A549 (cell line): ENCODE measurements at regions of chr7 and their contacts with region 1.

Region 1: DNA sequence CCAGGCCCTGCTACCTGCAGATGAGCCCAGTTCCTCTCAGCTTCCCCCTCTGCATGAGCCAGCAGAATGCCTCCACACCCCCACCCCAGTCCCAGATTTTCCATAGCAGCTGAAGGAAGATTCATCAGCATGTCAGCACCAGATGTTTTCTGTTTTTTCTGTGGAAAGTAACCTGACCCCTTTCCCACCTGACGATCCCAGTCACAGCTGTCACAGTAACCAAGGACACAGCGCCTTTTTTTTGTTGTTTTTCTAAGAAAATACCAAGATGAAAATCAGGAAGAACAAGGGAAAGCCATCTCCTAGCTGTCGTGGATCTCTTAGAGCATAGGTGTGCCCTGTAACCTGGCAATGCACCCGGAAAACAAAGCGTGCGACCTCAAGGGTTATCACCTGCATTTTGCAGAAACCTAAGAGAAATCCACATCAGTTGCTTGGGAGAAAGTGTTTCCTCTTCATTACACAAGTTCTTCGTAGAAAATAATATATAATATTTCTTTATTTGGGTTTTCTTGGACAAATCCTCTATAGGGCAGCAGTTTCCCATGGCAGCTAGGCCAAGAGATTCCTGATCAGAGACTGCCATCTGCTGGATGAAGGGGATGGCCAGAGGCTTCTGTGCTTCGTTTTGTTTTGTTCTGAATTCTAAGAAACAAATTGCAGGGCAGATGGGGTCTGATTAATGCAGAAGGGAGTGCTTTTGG is 401.9 kb downstream of the TNS3 start:
- DNase-seq: peak; percentile 55 to 66
- ATAC-seq: peak; percentile 89 to 96
- H3K4me3 ChIP-seq: no peak overlapping the region
- H3K27ac ChIP-seq: peak overlapping the region; percentile 32 to 72; a peak in 5 of 6 replicates
- H3K4me1 ChIP-seq: peaks cover 6% of the 10 kb centered on the region; the same call in 2 of the 3 replicates
- CTCF ChIP-seq: peak; percentile 96
- EP300 ChIP-seq: no peak
- POLR2A ChIP-seq: no peak
- RAD21 ChIP-seq: peak; percentile 96

Region 2: DNA sequence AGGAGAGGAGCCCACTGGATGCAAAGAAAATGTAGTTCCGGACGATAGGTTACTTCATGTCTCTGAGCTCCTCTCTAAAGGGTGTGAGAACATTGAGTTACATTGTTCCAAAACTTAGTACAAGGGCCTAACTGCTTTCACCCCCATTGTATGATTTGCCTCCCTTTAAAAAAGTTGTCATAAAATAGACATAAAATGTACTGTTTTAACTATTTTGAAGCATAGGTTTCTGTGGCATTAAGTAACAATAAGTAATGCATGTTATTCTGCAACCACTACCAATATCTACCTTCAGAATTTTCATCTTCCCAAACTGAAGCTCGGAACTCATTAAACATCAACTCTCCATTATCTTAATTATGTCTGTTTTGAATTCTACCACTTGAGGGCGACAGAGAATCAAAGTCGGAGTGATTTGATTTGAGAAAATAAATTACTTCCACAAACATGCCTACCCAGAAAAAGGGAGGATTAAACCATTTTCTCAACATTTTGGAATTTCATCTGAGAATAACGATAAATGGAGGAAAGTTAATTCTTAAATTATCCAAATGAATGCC is 1289.0 kb before region 1 on chr7:
- CTCF ChIA-PET with region 1: interaction called, 27 read pairs
- POLR2A ChIA-PET with region 1: no interaction called
- DNase-seq: peak in 1 of 2 experiments; percentile 38
- ATAC-seq: no peak
- H3K4me3 ChIP-seq: no peak overlapping the region
- H3K27ac ChIP-seq: peak overlapping the region in 1 of 2 experiments; percentile 86; a peak in 1 of 6 replicates
- H3K4me1 ChIP-seq: peaks cover 27% of the 10 kb centered on the region
- CTCF ChIP-seq: peak; percentile 87
- EP300 ChIP-seq: no peak
- POLR2A ChIP-seq: no peak
- RAD21 ChIP-seq: peak; percentile 81 to 87

Region 3: GRCh38 chr7:45902820-45903219 is 1277.1 kb before region 1 on chr7:
- CTCF ChIA-PET with region 1: interaction called, 10 read pairs
- POLR2A ChIA-PET with region 1: no interaction called
- DNase-seq: no peak
- ATAC-seq: no peak; a peak in 1 of 6 replicates
- H3K4me3 ChIP-seq: no peak overlapping the region
- H3K27ac ChIP-seq: no peak overlapping the region
- H3K4me1 ChIP-seq: no peaks in the 10 kb centered on the region
- CTCF ChIP-seq: no peak
- EP300 ChIP-seq: no peak
- POLR2A ChIP-seq: no peak
- RAD21 ChIP-seq: no peak

Region 4: DNA sequence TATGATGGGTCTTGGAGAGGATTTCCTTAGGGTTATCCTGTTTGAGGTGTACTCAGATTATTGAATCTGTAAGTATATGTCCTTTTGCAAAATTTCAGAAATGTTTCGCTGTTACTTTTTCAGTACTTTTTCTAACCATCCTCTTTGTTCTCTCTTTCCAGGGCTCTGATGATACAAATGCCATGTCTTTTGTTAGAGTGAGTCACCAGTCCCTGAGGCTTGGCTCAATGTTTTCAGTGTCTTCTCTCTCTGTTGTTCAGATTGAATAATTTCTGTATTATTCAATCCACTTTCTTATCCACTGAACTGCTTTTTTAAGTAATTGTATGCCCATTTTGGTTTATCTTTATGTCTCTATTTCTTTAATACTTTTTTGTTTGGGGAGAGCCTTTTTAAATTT is 47.5 kb before region 1 on chr7:
- CTCF ChIA-PET with region 1: no interaction called
- POLR2A ChIA-PET with region 1: no interaction called
- DNase-seq: no peak
- ATAC-seq: no peak
- H3K4me3 ChIP-seq: no peak overlapping the region
- H3K27ac ChIP-seq: no peak overlapping the region
- H3K4me1 ChIP-seq: no peaks in the 10 kb centered on the region
- CTCF ChIP-seq: no peak
- EP300 ChIP-seq: no peak
- POLR2A ChIP-seq: no peak
- RAD21 ChIP-seq: no peak